ENCODE measurements at regions of chr1 and their contacts with region 1.

Region 1: DNA sequence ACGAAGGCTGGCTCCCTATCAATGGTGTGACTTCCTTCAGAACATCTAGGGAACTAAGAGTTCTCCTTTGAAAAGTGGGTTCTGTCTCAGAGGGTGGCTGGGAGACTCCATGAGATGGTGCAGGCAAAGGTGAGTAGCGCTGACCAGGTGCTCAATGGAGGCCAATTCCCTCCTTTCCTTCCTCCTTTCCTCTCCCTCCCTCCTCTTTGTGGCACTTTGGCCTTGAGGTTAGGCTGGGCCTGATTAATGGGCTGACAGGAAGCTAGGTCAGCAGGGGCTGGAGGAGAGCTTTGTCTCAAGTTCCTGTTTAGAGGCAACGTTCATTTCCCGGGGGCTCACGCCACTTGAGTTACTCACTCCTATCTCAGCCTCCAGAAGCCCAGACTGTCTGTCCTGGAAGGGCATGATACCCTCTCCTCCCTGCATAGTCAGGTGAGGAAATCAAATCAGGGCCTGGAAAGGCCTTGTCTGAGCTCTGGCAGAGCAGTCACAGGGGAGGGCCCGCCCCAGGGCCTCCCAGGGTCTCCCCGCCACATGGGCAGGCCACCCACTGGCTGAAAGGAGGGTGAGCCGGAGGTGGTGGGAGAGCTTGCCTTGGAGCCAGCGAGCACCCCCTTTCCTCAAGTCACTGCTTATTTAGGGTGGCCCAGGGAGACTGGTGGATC is 58.4 kb upstream of the SSBP3 start:
- DNase-seq: peak; percentile 88 to 98 (median 92)
- ATAC-seq: peak; percentile 92
- H3K4me3 ChIP-seq: no peak overlapping the region
- H3K27ac ChIP-seq: peak overlapping the region; percentile 67
- H3K4me1 ChIP-seq: peaks cover 37 to 41% of the 10 kb centered on the region in 2 experiments
- H3K27me3 ChIP-seq: no peaks in the 10 kb centered on the region
- CTCF ChIP-seq: no peak
- EP300 ChIP-seq: peak; percentile 95
- POLR2A ChIP-seq: no peak
- RAD21 ChIP-seq: peak; percentile 8 to 46; a peak in 2 of 4 replicates

Region 2: GRCh38 chr1:54421101-54421504 is 43.5 kb before region 1 on chr1:
- CTCF ChIA-PET with region 1: no interaction called
- POLR2A ChIA-PET with region 1: interaction called, 3 read pairs
- in situ Hi-C with region 1: no loop called
- intact Hi-C with region 1: loop called (anchors 5 kb)
- DNase-seq: peak in 1 of 4 experiments; percentile 53
- ATAC-seq: no peak
- H3K4me3 ChIP-seq: no peak overlapping the region
- H3K27ac ChIP-seq: no peak overlapping the region
- H3K4me1 ChIP-seq: peaks cover 9 to 11% of the 10 kb centered on the region in 2 experiments; a peak in 4 of 5 replicates
- H3K27me3 ChIP-seq: no peaks in the 10 kb centered on the region
- CTCF ChIP-seq: no peak
- EP300 ChIP-seq: no peak
- POLR2A ChIP-seq: no peak
- RAD21 ChIP-seq: no peak

Region 3: GRCh38 chr1:54516249-54516920 is 51.8 kb after region 1 on chr1:
- CTCF ChIA-PET with region 1: no interaction called
- POLR2A ChIA-PET with region 1: no interaction called
- in situ Hi-C with region 1: no loop called
- intact Hi-C with region 1: no loop called
- DNase-seq: no peak
- ATAC-seq: no peak
- H3K4me3 ChIP-seq: no peak overlapping the region
- H3K27ac ChIP-seq: no peak overlapping the region
- H3K4me1 ChIP-seq: peaks cover 0 to 4% of the 10 kb centered on the region in 2 experiments; a peak in 2 of 5 replicates
- H3K27me3 ChIP-seq: peaks cover 16 to 25% of the 10 kb centered on the region in 2 experiments
- CTCF ChIP-seq: no peak
- EP300 ChIP-seq: no peak
- POLR2A ChIP-seq: no peak
- RAD21 ChIP-seq: no peak

Measured in K562 (cell line).